ENCODE measurements at regions of chr11 and their contacts with region 1.

Region 1: DNA sequence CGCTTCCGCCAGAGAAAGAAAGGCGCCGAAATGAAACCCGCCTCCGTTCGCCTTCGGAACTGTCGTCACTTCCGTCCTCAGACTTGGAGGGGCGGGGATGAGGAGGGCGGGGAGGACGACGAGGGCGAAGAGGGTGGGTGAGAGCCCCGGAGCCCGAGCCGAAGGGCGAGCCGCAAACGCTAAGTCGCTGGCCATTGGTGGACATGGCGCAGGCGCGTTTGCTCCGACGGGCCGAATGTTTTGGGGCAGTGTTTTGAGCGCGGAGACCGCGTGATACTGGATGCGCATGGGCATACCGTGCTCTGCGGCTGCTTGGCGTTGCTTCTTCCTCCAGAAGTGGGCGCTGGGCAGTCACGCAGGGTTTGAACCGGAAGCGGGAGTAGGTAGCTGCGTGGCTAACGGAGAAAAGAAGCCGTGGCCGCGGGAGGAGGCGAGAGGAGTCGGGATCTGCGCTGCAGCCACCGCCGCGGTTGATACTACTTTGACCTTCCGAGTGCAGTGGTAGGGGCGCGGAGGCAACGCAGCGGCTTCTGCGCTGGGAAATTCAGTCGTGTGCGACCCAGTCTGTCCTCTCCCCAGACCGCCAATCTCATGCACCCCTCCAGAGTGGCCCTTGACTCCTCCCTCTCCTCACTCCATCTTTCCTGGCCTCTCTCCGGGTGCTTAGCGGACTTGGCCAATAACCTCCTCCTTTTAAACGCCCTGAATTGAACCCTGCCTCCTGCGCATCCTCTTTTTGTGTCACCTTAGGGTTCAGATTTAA is at the start of gene ATM:
- DNase-seq: peak; percentile 99 to 100
- H3K4me3 ChIP-seq: peak within 1 kb of the TSS; percentile 72 to 82
- H3K27ac ChIP-seq: peak within 1 kb of the TSS; percentile 90 to 94
- H3K4me1 ChIP-seq: peaks cover 3 to 44% (median 12%) of the 10 kb centered on the region in 4 donors
- H3K27me3 ChIP-seq: no peaks in the 10 kb centered on the region
- CTCF ChIP-seq: peak; percentile 42 to 72

Region 2: GRCh38 chr11:108008656-108009496 is 214.0 kb before region 1 on chr11 and contains the start of gene CUL5:
- intact Hi-C with region 1: loop called (anchors 5 kb)
- DNase-seq: peak; percentile 91 to 95
- H3K4me3 ChIP-seq: peak within 1 kb of the TSS; percentile 71 to 72
- H3K27ac ChIP-seq: peak within 1 kb of the TSS; percentile 98
- H3K4me1 ChIP-seq: peaks cover 0 to 36% (median 24%) of the 10 kb centered on the region in 4 donors
- H3K27me3 ChIP-seq: no peaks in the 10 kb centered on the region
- CTCF ChIP-seq: peak; percentile 85

Region 3: DNA sequence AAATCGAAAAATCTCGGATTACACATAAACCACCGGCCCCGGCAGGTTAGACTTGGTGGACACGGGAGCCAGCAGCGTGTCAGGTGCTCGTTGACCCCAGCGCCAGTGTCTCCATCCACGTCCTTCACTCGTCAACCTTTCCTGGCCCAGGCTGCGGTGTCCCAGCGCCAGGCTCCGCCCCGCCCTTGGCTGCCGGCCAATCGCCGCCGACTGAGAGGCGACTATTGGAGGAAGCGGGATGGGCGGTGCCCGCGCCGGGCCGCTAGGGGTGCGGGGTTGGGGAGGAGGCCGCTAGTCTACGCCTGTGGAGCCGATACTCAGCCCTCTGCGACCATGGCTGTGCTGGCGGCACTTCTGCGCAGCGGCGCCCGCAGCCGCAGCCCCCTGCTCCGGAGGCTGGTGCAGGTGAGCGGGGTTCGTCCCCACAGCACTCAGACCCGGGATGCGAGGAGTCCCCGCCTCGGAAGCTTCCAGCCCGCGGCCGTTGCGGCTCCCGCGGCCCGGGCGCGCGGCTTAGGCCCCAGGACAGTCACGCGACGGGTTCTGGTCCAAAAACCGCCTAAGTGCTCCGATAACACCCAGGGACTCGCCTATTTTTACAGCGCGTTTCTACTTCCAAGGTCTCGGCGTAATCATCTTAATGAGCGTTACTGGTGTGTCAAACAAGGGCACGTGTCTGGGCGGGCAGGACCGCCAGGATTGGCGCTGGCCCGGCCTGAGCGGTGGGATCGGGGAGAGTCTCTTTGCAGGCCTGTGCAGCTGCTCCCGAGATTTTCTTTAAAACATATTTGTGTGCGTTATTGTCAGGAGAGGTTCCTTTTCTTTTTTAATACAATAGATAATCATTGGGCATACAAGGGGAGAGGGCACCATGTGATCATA is 101.4 kb before region 1 on chr11 and contains the start of gene ACAT1:
- intact Hi-C with region 1: loop called (anchors 5 kb)
- DNase-seq: peak; percentile 97 to 99
- H3K4me3 ChIP-seq: peak within 1 kb of the TSS; percentile 84 to 87
- H3K27ac ChIP-seq: peak within 1 kb of the TSS; percentile 98
- H3K4me1 ChIP-seq: peaks cover 0 to 36% (median 22%) of the 10 kb centered on the region in 4 donors
- H3K27me3 ChIP-seq: no peaks in the 10 kb centered on the region
- CTCF ChIP-seq: peak; percentile 35 to 63

Region 4: DNA sequence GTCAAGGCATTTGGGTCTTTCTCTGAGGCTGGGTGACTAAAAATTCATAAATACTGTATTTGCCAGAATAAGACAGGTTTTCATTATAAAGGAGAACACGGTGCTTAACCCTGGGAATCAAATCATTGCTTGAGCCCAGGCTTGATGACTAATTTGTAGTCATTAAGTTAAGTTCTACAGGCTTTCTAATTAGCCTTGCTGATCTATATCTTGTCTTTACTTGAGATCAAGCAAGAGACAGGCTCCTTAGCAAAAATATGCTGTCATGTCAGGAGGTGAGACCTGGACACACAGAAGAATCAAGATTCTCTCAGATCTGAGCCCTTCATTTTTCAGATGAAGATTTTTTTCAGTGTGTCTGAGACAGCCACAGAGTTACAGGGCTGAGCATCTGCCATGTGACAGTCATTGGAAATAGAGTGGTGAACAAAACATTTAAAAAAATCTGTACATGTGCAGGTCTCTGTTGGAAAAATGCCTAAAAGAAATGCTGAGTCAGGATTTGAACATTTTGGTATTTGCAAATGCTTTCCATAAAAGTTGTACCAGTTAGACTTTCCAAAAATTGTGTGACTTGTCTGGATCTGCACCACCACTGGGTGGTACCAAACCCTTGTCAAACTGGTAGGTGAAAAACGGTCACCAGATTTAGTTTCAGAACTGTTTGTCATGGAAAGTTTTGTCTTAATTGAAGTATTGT is 86.9 kb before region 1 on chr11:
- intact Hi-C with region 1: no loop called
- DNase-seq: no peak
- H3K4me3 ChIP-seq: no peak overlapping the region
- H3K27ac ChIP-seq: no peak overlapping the region
- H3K4me1 ChIP-seq: peaks cover 0 to 1% (median 0%) of the 10 kb centered on the region in 4 donors
- H3K27me3 ChIP-seq: no peaks in the 10 kb centered on the region
- CTCF ChIP-seq: no peak

Measured in tibial artery (tissue), 4 donors.